ENCODE measurements at regions of chr14 and their contacts with region 1.

Region 1: DNA sequence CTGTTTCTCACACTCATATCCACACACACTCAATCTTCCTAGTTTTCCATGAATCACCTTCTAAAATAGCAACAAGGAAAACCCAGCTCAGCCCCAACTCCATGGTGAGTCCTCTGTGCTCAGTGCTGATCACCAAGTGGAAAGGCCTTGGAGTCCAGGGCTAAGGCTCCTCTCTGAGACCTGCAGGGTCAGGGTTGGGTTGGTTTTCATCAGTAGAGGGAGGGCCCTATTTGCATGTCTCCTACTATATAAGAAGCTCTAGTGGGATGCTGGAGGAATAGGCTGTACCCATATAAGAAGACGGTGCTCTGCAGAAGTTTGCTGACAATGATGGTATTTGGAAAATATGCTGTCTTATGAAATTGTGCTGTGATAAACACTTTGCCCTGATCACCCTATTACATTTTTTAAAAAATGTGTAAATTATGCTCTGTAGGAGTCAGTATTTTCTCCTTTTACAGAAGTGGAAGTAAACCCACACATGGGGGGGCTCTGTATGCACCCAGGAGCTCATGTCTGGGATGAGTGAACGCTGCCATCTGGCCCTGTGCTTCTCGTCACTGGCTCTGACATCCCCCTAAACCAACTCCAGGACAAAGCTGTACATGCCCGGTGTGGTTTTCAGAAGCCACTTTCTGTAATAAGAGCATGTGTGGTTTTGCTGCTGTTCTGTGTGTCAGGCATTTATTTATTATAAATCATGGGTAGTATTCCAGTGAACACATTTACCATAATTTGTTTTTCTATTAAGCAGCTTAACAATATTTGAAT is 536.3 kb downstream of the TMEM121 start:
- DNase-seq: no peak
- ATAC-seq: no peak
- H3K4me3 ChIP-seq: no peak overlapping the region
- H3K4me3 Mint-ChIP-seq: no peak overlapping the region
- H3K27ac ChIP-seq: no peak overlapping the region
- H3K27ac Mint-ChIP-seq: no peak overlapping the region
- H3K4me1 ChIP-seq: peaks cover 8% of the 10 kb centered on the region
- H3K4me1 Mint-ChIP-seq: peaks cover 10 to 16% of the 10 kb centered on the region in 2 donors
- H3K27me3 ChIP-seq: peaks cover 3% of the 10 kb centered on the region
- H3K27me3 Mint-ChIP-seq: peaks cover 25 to 73% of the 10 kb centered on the region in 2 donors
- CTCF ChIP-seq: no peak

Region 2: DNA sequence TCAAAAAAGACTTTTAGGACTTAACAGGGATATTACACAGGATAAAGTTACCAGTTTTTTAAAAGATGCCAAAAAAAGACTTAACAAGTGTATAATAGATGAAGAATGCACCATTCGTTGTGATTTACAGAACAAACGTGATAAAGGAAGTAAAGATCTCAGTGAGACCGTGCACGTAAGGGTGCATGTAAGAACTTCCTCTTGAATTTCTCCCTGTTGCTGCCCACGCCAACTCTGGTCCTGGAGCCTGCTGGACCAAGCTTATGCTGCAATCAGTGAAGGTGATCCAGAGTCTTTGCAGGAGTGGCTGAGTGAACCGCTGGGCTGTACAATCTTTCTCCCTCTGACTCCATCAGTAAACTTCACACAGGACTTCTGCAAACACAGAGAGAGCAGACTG is 57.4 kb after region 1 on chr14:
- intact Hi-C with region 1: loop called (anchors 2 kb)
- DNase-seq: no peak
- ATAC-seq: no peak
- H3K4me3 ChIP-seq: no peak overlapping the region
- H3K4me3 Mint-ChIP-seq: no peak overlapping the region
- H3K27ac ChIP-seq: no peak overlapping the region
- H3K27ac Mint-ChIP-seq: no peak overlapping the region
- H3K4me1 ChIP-seq: no peaks in the 10 kb centered on the region
- H3K4me1 Mint-ChIP-seq: peaks cover 18 to 19% of the 10 kb centered on the region in 2 donors
- H3K27me3 ChIP-seq: peaks cover 5% of the 10 kb centered on the region
- H3K27me3 Mint-ChIP-seq: peaks cover 21 to 28% of the 10 kb centered on the region in 2 donors
- CTCF ChIP-seq: no peak

Measured in natural killer cell (primary cell).